Endothelial cell of umbilical vein (primary cell): ENCODE measurements at regions of chr13 and their contacts with region 1.

Region 1: GRCh38 chr13:79423801-79424642 is 18.0 kb upstream of the RBM26 start:
- DNase-seq: peak; percentile 53
- H3K4me3 ChIP-seq: no peak overlapping the region
- H3K27ac ChIP-seq: no peak overlapping the region
- H3K4me1 ChIP-seq: no peaks in the 10 kb centered on the region
- H3K27me3 ChIP-seq: no peaks in the 10 kb centered on the region
- CTCF ChIP-seq: peak; percentile 30 to 39
- POLR2A ChIP-seq: no peak

Region 2: GRCh38 chr13:78137404-78138142 is 1286.4 kb before region 1 on chr13:
- CTCF ChIA-PET with region 1: interaction called, 12 read pairs
- POLR2A ChIA-PET with region 1: no interaction called
- dilution Hi-C with region 1: no loop called
- intact Hi-C with region 1: no loop called
- DNase-seq: peak; percentile 71
- H3K4me3 ChIP-seq: no peak overlapping the region
- H3K27ac ChIP-seq: no peak overlapping the region
- H3K4me1 ChIP-seq: peaks cover 4% of the 10 kb centered on the region
- H3K27me3 ChIP-seq: peaks cover 0 to 2% of the 10 kb centered on the region in 2 experiments
- CTCF ChIP-seq: peak; percentile 55 to 61
- POLR2A ChIP-seq: no peak

Region 3: GRCh38 chr13:79374578-79374977 is 49.4 kb before region 1 on chr13:
- CTCF ChIA-PET with region 1: no interaction called
- POLR2A ChIA-PET with region 1: no interaction called
- dilution Hi-C with region 1: no loop called
- intact Hi-C with region 1: no loop called
- DNase-seq: no peak
- H3K4me3 ChIP-seq: no peak overlapping the region
- H3K27ac ChIP-seq: no peak overlapping the region
- H3K4me1 ChIP-seq: no peaks in the 10 kb centered on the region
- H3K27me3 ChIP-seq: no peaks in the 10 kb centered on the region
- CTCF ChIP-seq: no peak
- POLR2A ChIP-seq: no peak

Region 4: DNA sequence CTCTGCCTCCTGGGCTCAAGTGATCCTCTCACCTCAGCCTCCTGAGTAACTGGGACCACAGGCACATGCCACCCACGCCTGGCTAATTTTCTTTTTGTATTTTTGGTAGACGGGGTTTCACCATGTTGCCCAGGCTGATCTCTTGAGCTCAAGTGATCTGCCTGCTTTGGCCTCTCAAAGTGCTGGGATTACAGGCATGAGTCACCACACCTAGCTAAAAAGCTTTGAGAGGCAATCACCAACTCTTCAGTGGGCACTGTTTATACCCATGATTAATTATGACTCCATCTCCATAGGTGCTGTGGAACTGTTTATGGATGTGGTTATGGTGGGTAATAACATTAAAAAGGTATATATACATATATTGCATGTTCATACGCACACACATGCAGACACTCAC is 10.5 kb before region 1 on chr13:
- CTCF ChIA-PET with region 1: interaction called, 17 read pairs
- POLR2A ChIA-PET with region 1: no interaction called
- dilution Hi-C with region 1: no loop called
- intact Hi-C with region 1: no loop called
- DNase-seq: no peak
- H3K4me3 ChIP-seq: no peak overlapping the region
- H3K27ac ChIP-seq: no peak overlapping the region
- H3K4me1 ChIP-seq: no peaks in the 10 kb centered on the region
- H3K27me3 ChIP-seq: no peaks in the 10 kb centered on the region
- CTCF ChIP-seq: no peak
- POLR2A ChIP-seq: no peak

Region 5: GRCh38 chr13:79451500-79451962 is 27.5 kb after region 1 on chr13:
- CTCF ChIA-PET with region 1: interaction called, 21 read pairs
- POLR2A ChIA-PET with region 1: no interaction called
- dilution Hi-C with region 1: no loop called
- intact Hi-C with region 1: no loop called
- DNase-seq: peak; percentile 65
- H3K4me3 ChIP-seq: no peak overlapping the region
- H3K27ac ChIP-seq: no peak overlapping the region
- H3K4me1 ChIP-seq: peaks cover 14% of the 10 kb centered on the region
- H3K27me3 ChIP-seq: no peaks in the 10 kb centered on the region
- CTCF ChIP-seq: no peak
- POLR2A ChIP-seq: no peak

Region 6: DNA sequence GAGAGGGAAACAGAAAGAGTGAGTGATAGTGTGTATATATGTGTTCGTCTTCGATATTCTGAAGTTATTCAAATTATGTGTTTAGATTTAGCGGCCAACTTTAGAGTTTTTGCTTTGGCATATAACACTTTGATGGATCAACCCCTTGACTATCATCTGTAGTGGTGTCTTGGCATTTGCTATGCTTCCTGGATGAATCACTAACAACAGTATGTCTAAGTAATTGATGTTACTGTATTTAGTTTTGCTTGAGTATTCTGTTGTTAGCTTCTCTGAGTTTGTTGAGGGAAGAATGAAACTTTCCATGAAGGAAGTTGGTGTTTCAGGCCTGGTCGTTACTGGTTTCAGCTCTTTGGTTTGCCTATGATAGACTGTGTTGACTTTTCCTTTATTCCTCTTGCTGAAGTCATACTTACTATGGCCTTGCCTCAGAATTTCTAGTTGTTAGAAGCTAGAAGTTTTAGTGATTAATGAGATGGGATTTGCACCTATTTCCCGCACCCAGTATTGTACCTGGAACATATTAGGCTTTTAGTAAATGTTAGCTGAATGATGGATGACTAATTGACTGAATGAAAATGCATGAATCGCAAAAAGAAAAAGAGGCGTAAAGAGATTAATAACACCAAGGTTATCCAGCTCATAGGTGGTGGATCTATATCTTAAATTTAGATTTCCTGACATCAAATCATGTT is 77.7 kb after region 1 on chr13:
- CTCF ChIA-PET with region 1: interaction called, 18 read pairs
- POLR2A ChIA-PET with region 1: no interaction called
- dilution Hi-C with region 1: no loop called
- intact Hi-C with region 1: no loop called
- DNase-seq: no peak
- H3K4me3 ChIP-seq: no peak overlapping the region
- H3K27ac ChIP-seq: no peak overlapping the region
- H3K4me1 ChIP-seq: no peaks in the 10 kb centered on the region
- H3K27me3 ChIP-seq: no peaks in the 10 kb centered on the region
- CTCF ChIP-seq: no peak
- POLR2A ChIP-seq: no peak

Region 7: DNA sequence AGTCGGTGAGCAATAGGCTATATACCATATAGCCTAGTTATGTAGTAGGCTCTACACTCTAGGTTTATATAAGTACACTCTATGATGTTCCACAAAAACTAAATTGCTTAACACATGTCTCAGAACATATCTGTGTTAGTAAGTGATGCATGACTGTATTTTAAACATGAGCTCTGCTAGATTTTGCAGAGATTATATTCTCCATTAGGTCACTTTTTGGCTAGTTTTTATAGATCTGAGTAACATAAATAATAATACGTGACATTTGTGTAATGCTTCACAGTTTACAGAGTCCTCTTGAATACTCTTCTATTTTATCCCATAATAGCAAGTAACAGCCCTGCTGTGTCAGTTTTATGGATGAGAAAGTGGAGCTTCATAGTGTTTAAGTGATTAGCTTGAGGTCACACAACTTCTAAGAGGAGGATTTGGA is 104.8 kb after region 1 on chr13:
- CTCF ChIA-PET with region 1: interaction called, 815 read pairs
- POLR2A ChIA-PET with region 1: no interaction called
- dilution Hi-C with region 1: no loop called
- intact Hi-C with region 1: no loop called
- DNase-seq: no peak
- H3K4me3 ChIP-seq: no peak overlapping the region
- H3K27ac ChIP-seq: no peak overlapping the region
- H3K4me1 ChIP-seq: peaks cover 21% of the 10 kb centered on the region
- H3K27me3 ChIP-seq: no peaks in the 10 kb centered on the region
- CTCF ChIP-seq: no peak
- POLR2A ChIP-seq: no peak

Region 8: GRCh38 chr13:80419416-80419815 is 995.4 kb after region 1 on chr13:
- CTCF ChIA-PET with region 1: no interaction called
- POLR2A ChIA-PET with region 1: no interaction called
- dilution Hi-C with region 1: no loop called
- intact Hi-C with region 1: no loop called
- DNase-seq: no peak
- H3K4me3 ChIP-seq: no peak overlapping the region
- H3K27ac ChIP-seq: no peak overlapping the region
- H3K4me1 ChIP-seq: no peaks in the 10 kb centered on the region
- H3K27me3 ChIP-seq: no peaks in the 10 kb centered on the region
- CTCF ChIP-seq: no peak
- POLR2A ChIP-seq: no peak

Region 9: DNA sequence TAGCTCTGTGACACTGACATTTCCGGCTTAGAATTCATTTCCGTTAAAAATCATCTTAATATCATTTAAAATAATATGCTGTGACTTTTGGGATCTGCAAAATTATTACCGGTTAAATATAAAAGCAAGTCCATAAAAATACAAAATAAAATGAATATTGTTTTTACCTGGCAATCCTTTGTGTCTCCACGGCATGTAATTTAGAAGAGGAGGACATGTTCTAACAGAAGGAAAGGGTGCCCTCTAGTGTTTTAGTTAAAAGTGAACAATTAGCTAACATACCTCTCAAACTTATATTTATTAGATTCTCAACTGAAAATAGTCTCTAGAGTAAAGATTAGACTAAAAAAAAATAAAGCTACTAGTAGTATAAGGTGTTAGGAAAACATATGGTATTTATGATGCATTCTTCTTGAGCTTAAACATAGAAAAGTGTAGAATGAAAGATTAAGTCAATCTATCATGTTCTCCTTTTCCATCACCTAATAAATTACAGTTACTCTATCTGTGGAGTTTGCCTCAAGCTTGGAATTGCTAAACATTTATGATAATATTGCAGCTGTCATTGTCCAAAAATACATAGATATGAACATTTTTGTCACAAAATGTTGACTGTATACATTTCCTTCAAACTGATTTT is 1593.6 kb after region 1 on chr13:
- CTCF ChIA-PET with region 1: interaction called, 19 read pairs
- POLR2A ChIA-PET with region 1: no interaction called
- dilution Hi-C with region 1: no loop called
- intact Hi-C with region 1: no loop called
- DNase-seq: peak; percentile 57
- H3K4me3 ChIP-seq: no peak overlapping the region
- H3K27ac ChIP-seq: no peak overlapping the region
- H3K4me1 ChIP-seq: peaks cover 2% of the 10 kb centered on the region
- H3K27me3 ChIP-seq: no peaks in the 10 kb centered on the region
- CTCF ChIP-seq: peak; percentile 19 to 29
- POLR2A ChIP-seq: no peak